ENCODE measurements at regions of chr21 and their contacts with region 1.

Region 1: DNA sequence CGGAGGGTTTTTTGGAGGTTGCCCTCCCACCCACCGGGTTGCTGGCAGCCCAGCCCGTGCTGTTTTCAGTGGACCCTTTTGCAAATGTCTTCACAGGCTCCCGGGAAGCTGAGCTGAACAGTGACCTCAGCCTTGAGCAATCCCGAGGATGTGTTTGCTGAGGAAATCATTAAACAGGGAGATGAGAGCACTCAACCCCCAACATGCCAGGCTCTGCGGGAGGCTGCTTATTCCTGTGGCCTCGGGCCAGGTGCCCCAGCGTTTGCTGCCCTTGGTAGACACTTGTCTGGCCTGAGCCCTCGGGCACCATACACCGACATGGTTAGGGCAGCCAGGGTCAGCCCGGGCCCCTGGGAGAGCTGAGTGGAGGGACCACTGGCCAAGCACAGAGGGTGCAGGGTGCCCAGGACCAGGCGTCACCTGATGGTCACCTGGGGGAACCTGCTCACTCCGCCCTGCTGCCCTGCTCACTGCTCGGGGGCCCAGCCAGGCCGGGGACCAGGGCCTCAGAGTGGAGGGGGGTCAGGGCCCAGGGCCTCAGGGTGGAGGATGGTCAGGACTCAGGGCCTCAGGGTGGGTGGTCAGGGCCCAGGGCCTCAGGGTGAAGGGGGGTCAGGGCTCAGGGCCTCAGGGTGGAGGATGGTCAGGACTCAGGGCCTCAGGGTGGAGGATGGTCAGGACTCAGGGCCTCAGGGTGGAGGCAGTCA is 42.5 kb upstream of the POFUT2 start:
- DNase-seq: peak; percentile 71
- H3K4me3 ChIP-seq: no peak overlapping the region
- CTCF ChIP-seq: no peak

Region 2: GRCh38 chr21:45270306-45270821 is 59.9 kb before region 1 on chr21:
- in situ Hi-C with region 1: no loop called
- DNase-seq: no peak
- H3K4me3 ChIP-seq: no peak overlapping the region
- CTCF ChIP-seq: peak; percentile 22

Region 3: GRCh38 chr21:45470773-45471524 is 140.7 kb after region 1 on chr21:
- in situ Hi-C with region 1: loop called (anchors 25 kb)
- DNase-seq: peak; percentile 81
- H3K4me3 ChIP-seq: no peak overlapping the region
- CTCF ChIP-seq: no peak